ENCODE measurements at regions of chr15 and their contacts with region 1.

Region 1: DNA sequence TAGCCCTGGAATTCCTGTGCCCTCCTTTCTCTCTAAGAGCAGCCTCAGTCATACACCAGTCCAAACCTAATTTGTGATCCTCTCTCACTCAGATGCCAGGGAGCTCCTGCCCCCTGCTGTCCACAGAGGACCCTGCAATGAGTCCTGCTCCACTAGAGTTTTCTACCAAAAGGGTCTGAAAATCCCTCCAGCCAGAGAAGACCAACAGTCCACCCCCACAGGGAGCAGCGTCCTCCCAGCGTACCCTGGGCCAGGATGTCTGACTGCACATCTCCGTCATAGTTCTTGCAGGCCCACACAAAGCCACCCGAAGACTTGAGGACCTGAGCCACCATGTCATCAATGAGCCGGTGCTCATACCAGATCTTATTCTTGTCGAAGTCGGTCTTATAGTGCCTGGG is 15.4 kb downstream of the IDH2 start:
- DNase-seq: peak; percentile 36
- H3K4me3 ChIP-seq: no peak overlapping the region
- H3K27ac ChIP-seq: no peak overlapping the region
- H3K4me1 ChIP-seq: no peaks in the 10 kb centered on the region
- H3K27me3 ChIP-seq: no peaks in the 10 kb centered on the region
- CTCF ChIP-seq: peak; percentile 84 to 88

Region 2: GRCh38 chr15:89750560-89751542 is 336.0 kb before region 1 on chr15 and contains the start of gene MESP1:
- CTCF ChIA-PET with region 1: no interaction called
- dilution Hi-C with region 1: loop called (anchors 5 kb)
- in situ Hi-C with region 1: loop called (anchors 10 to 25 kb)
- intact Hi-C with region 1: no loop called
- DNase-seq: peak; percentile 85
- H3K4me3 ChIP-seq: peak within 1 kb of the TSS; percentile 44 to 65 (median 58)
- H3K27ac ChIP-seq: no peak within 1 kb of the TSS
- H3K4me1 ChIP-seq: peaks cover 16% of the 10 kb centered on the region
- H3K27me3 ChIP-seq: no peaks in the 10 kb centered on the region
- CTCF ChIP-seq: peak; percentile 42 to 79
- total RNA-seq, gene MESP1: under 0.01 TPM in 1 of 2 donors, not detected in the other

Region 3: GRCh38 chr15:89874926-89875564 is 211.8 kb before region 1 on chr15:
- CTCF ChIA-PET with region 1: no interaction called
- dilution Hi-C with region 1: loop called (anchors 5 kb)
- in situ Hi-C with region 1: no loop called
- intact Hi-C with region 1: no loop called
- DNase-seq: peak; percentile 50
- H3K4me3 ChIP-seq: no peak overlapping the region
- H3K27ac ChIP-seq: no peak overlapping the region
- H3K4me1 ChIP-seq: no peaks in the 10 kb centered on the region
- H3K27me3 ChIP-seq: no peaks in the 10 kb centered on the region
- CTCF ChIP-seq: peak; percentile 90 to 98

Region 4: DNA sequence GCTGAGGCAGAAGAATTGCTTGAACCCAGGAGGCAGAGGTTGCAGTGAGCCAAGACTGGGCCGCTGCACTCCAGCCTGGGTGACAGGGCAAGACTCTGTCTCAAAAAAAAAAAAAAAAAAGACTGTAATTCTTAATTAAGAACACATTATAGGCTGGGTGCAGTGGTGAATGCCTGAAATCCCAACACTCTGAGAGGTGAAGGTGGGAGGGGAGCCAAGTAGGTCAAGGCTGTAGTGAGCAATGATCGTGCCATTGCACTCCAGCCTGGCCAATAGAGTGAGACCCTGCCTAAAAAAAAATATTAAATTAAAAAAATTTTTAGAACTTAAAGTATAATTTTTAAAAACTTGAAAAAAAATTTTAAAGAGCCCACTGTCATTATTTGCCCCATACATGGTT is 160.7 kb before region 1 on chr15:
- CTCF ChIA-PET with region 1: interaction called, 33 read pairs
- dilution Hi-C with region 1: no loop called
- in situ Hi-C with region 1: no loop called
- intact Hi-C with region 1: no loop called
- DNase-seq: no peak
- H3K4me3 ChIP-seq: no peak overlapping the region
- H3K27ac ChIP-seq: no peak overlapping the region
- H3K4me1 ChIP-seq: no peaks in the 10 kb centered on the region
- H3K27me3 ChIP-seq: no peaks in the 10 kb centered on the region
- CTCF ChIP-seq: no peak

Region 5: GRCh38 chr15:90191794-90192509 is 105.1 kb after region 1 on chr15:
- CTCF ChIA-PET with region 1: no interaction called
- dilution Hi-C with region 1: no loop called
- in situ Hi-C with region 1: no loop called
- intact Hi-C with region 1: no loop called
- DNase-seq: peak; percentile 60
- H3K4me3 ChIP-seq: peak overlapping the region in 1 of 3 experiments; percentile 10
- H3K27ac ChIP-seq: peak overlapping the region; percentile 55
- H3K4me1 ChIP-seq: peaks cover 38% of the 10 kb centered on the region
- H3K27me3 ChIP-seq: no peaks in the 10 kb centered on the region
- CTCF ChIP-seq: peak in 1 of 2 donors; percentile 8